ENCODE measurements at regions of chr9 and their contacts with region 1.

Region 1: DNA sequence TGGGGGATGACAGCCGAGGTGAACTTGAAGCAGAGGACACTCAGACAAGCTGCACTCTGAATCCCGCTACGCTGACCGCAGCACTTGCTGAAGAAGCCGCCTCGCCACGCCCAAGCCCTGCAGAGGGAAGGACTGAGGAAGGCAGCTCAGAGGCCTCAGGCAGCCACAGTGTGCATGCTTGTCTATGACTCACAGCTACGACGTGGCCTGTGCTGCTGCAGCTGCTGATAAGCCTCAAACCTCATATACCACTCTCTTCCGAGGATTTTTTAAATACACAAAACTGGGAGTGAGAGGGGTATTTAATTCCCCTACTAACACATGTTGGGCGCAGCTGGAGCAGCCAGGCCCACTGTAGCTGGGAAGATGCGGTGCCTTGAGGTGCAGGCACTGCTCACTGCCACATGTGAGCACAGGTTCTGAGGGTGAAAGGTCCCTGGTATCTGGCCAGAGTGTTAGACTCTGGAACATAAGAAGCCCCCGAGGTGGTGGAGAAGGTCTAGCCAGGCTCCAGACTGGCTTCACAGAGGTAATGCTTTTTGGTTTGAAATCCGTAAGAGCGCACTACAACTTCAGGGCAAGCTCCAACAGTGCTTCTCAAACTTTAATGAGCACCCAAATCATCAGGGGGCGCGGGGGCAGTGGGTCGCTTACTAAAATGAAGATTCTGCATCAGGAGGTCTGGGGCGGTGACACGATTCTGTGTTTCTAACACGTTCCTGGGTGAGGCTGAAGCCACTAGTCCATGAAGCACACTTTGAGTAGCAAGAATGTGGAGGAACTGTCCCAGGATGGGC is 196.8 kb downstream of the AUH start:
- DNase-seq: peak; percentile 91
- ATAC-seq: peak; percentile 80
- H3K4me3 Mint-ChIP-seq: peak overlapping the region; percentile 67
- H3K27ac Mint-ChIP-seq: peak overlapping the region; percentile 95
- H3K4me1 Mint-ChIP-seq: peaks cover 47% of the 10 kb centered on the region
- H3K27me3 Mint-ChIP-seq: no peaks in the 10 kb centered on the region

Region 2: DNA sequence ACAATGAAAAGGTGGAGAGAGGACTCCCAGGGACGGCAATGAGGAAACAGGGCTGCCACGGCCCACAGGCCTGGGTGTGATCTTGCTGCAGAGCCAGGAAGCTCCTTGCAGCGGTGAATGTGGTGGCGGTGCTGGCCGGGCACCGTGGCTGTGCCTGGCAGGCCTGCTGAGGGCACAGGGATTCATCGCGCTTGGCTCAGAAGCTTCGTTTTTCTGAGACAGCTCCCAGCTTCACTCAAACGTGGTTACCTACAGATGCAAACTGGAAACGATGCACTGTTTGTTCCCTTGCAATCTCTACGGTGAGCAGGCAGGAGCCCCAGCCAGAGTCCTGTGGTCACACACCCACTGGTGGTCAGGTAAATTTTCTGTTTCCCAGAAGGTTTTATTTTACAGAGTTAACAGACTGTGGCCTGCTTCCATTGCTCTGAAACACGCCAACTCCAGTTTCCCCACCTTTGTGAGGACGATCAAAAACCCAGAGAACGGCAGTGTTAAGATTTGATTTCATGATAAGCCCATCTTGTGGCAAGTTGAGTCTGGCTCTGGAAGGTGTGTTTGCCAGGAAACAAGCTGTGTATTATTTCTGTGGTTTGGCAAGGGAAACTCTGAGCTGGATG is 12.8 kb after region 1 on chr9:
- CTCF ChIA-PET with region 1: interaction called, 8 read pairs
- POLR2A ChIA-PET with region 1: interaction called, 6 read pairs
- intact Hi-C with region 1: loop called in 1 of 2 experiments (anchors 1 kb)
- DNase-seq: peak; percentile 79
- ATAC-seq: peak; percentile 73
- H3K4me3 Mint-ChIP-seq: peak overlapping the region; percentile 22
- H3K27ac Mint-ChIP-seq: peak overlapping the region; percentile 99
- H3K4me1 Mint-ChIP-seq: peaks cover 64% of the 10 kb centered on the region
- H3K27me3 Mint-ChIP-seq: no peaks in the 10 kb centered on the region

Region 3: GRCh38 chr9:91334053-91334452 is 169.1 kb after region 1 on chr9:
- CTCF ChIA-PET with region 1: no interaction called
- POLR2A ChIA-PET with region 1: no interaction called
- intact Hi-C with region 1: no loop called
- DNase-seq: peak; percentile 49
- ATAC-seq: peak; percentile 96
- H3K4me3 Mint-ChIP-seq: no peak overlapping the region
- H3K27ac Mint-ChIP-seq: no peak overlapping the region
- H3K4me1 Mint-ChIP-seq: peaks cover 12% of the 10 kb centered on the region
- H3K27me3 Mint-ChIP-seq: no peaks in the 10 kb centered on the region